Common myeloid progenitor, CD34-positive (primary cell): ENCODE measurements at regions of chr4 and their contacts with region 1.

Region 1: GRCh38 chr4:127732613-127733328 is 2.6 kb downstream of the SLC25A31 start:
- DNase-seq: peak; percentile 42 to 68 (median 61)
- H3K4me3 ChIP-seq: no peak overlapping the region
- H3K27ac ChIP-seq: no peak overlapping the region
- H3K4me1 ChIP-seq: no peaks in the 10 kb centered on the region
- H3K27me3 ChIP-seq: no peaks in the 10 kb centered on the region

Region 2: DNA sequence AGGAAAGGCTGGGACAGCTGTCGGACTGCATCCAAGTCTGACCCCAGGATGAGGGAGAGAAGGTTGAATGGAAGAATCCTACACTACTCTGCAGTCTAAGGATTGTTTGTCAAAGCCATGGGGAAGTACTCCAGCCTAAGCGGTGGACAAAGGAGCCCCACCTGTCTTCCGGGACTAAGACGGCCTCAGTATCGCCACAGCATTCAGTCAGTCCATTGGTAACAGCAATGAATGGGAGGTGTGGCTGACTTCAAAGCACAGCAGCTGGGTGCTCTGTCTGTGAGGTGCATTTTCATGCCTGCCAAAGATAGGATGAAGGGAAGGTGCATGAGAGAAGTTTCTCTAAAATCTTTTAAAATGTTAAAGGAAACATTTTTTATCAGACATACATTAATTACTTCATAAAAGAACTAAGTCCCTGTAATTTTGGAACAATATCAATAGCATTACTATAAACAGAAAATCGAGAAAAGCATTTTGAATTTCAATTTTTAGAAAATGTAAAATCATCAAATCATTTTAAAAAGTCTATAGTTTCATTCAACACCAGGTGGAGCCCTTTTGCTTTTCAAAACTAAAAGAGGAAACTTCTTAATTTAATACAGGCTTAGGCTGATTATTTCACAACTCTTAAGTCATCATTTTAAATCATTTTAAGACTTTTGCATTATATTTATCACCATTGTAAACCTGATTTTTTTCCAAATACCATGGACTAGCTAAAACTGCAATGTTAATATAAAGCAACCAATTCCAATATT is 127.6 kb before region 1 on chr4:
- CTCF ChIA-PET with region 1: interaction called, 112 read pairs
- POLR2A ChIA-PET with region 1: interaction called, 3 read pairs
- DNase-seq: peak; percentile 43 to 74 (median 68)
- H3K4me3 ChIP-seq: no peak overlapping the region
- H3K27ac ChIP-seq: no peak overlapping the region
- H3K4me1 ChIP-seq: no peaks in the 10 kb centered on the region
- H3K27me3 ChIP-seq: peaks cover 0 to 12% (median 5%) of the 10 kb centered on the region in 5 experiments

Region 3: GRCh38 chr4:127616898-127617297 is 115.9 kb before region 1 on chr4:
- CTCF ChIA-PET with region 1: interaction called, 15 read pairs
- POLR2A ChIA-PET with region 1: no interaction called
- DNase-seq: no peak
- H3K4me3 ChIP-seq: no peak overlapping the region
- H3K27ac ChIP-seq: no peak overlapping the region
- H3K4me1 ChIP-seq: no peaks in the 10 kb centered on the region
- H3K27me3 ChIP-seq: peaks cover 4 to 22% (median 7%) of the 10 kb centered on the region in 5 experiments